HCT116 (cell line): ENCODE measurements at regions of chr12 and their contacts with region 1.

Region 1: GRCh38 chr12:47397664-47398281 is 308.1 kb downstream of the RPAP3 start:
- DNase-seq: peak; percentile 34
- ATAC-seq: peak; percentile 99
- H3K4me3 ChIP-seq: no peak overlapping the region
- H3K27ac ChIP-seq: no peak overlapping the region
- H3K4me1 ChIP-seq: no peaks in the 10 kb centered on the region
- H3K27me3 ChIP-seq: no peaks in the 10 kb centered on the region
- CTCF ChIP-seq: peak; percentile 54 to 63 (median 54); a peak in 5 of 6 replicates
- POLR2A ChIP-seq: no peak
- RAD21 ChIP-seq: peak; percentile 81

Region 2: DNA sequence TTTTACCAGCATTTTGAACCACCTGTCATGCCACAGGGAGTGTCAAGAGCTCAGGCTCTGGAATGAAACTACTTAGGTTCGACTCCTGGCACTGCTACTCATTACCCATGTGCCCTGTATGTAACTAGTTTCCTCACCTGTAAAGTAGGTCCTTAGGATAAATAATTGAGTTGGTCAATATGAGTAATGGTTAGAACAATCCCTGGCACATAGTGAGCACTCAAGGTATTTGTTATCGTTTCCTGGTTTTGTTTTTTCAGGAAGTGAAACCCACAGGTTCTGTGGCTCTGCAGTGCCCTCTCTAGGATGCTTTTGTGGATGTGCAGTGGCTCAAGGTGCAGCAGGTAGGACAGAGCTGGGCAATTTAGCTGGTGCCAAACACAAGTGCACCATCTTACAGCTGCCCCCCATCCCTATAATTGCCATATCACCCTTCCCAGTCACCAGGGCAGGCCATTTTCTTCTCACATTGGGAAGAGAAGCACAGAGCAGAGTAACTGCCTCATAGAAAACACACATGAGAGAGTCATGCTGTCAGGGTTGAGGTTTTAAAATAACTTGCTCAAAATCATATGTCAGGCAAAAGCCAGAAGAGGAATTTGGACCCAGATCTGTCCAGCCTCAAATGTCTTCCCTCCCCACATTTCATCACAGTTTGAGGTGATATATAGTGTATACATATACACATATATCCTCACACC is 10.5 kb after region 1 on chr12:
- CTCF ChIA-PET with region 1: interaction called, 10 read pairs
- POLR2A ChIA-PET with region 1: no interaction called
- RAD21 ChIA-PET with region 1: no interaction called
- intact Hi-C with region 1: no loop called
- DNase-seq: peak; percentile 19
- ATAC-seq: peak; percentile 94
- H3K4me3 ChIP-seq: no peak overlapping the region
- H3K27ac ChIP-seq: no peak overlapping the region
- H3K4me1 ChIP-seq: peaks cover 0 to 6% of the 10 kb centered on the region in 2 experiments; a peak in 1 of 4 replicates
- H3K27me3 ChIP-seq: no peaks in the 10 kb centered on the region
- CTCF ChIP-seq: peak; percentile 42 to 59 (median 56); a peak in 5 of 6 replicates
- POLR2A ChIP-seq: no peak
- RAD21 ChIP-seq: peak; percentile 69

Region 3: GRCh38 chr12:47545938-47546609 is 148.3 kb after region 1 on chr12:
- CTCF ChIA-PET with region 1: no interaction called
- POLR2A ChIA-PET with region 1: no interaction called
- RAD21 ChIA-PET with region 1: no interaction called
- intact Hi-C with region 1: no loop called
- DNase-seq: no peak
- ATAC-seq: no peak
- H3K4me3 ChIP-seq: no peak overlapping the region
- H3K27ac ChIP-seq: no peak overlapping the region
- H3K4me1 ChIP-seq: no peaks in the 10 kb centered on the region
- H3K27me3 ChIP-seq: no peaks in the 10 kb centered on the region
- CTCF ChIP-seq: no peak
- POLR2A ChIP-seq: no peak
- RAD21 ChIP-seq: no peak